ENCODE measurements at regions of chr2 and their contacts with region 1.

Region 1: DNA sequence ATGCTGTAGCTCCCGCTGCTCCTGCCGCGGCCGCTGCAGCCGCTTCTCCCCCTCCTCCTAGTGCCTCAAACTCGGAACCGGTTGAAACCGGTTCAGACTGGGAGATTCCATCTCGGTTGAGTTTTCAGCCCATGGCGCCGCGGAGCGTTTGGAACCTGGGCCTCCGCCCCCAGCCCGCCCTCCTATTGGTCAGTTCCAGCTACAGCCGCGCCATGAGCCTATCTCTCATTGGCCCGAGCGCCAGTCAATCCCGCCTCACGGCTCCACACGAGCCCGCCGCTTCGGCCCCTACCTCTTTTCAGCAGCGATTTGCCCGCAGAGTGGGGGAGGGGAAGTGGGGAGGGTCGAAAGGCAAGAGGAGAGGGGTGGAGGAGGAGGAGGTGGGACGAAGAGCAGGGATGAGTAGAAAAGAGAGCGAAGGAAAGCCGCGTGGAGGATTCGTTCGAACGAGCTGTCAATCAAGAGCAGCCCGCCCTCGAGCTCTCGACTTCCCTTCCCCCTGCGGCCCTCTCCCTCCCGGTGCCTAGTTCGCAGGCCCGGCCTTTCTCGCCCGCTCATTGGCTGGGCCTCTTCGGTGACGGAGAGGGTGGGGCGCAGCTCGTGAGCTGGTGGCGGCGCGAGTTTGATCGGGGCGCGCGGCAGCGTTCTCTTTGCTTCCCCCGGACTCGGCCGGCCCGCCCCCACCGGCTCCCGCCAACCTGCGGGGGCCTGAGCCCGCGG is at the start of gene XPO1:
- DNase-seq: peak; percentile 99 to 100
- H3K4me3 ChIP-seq: peak within 1 kb of the TSS; percentile 79 to 97
- H3K27ac ChIP-seq: peak within 1 kb of the TSS; percentile 98 to 99
- H3K4me1 ChIP-seq: peaks cover 6 to 29% (median 20%) of the 10 kb centered on the region in 4 donors
- H3K27me3 ChIP-seq: no peaks in the 10 kb centered on the region
- CTCF ChIP-seq: peak in 1 of 2 experiments; percentile 10

Region 2: DNA sequence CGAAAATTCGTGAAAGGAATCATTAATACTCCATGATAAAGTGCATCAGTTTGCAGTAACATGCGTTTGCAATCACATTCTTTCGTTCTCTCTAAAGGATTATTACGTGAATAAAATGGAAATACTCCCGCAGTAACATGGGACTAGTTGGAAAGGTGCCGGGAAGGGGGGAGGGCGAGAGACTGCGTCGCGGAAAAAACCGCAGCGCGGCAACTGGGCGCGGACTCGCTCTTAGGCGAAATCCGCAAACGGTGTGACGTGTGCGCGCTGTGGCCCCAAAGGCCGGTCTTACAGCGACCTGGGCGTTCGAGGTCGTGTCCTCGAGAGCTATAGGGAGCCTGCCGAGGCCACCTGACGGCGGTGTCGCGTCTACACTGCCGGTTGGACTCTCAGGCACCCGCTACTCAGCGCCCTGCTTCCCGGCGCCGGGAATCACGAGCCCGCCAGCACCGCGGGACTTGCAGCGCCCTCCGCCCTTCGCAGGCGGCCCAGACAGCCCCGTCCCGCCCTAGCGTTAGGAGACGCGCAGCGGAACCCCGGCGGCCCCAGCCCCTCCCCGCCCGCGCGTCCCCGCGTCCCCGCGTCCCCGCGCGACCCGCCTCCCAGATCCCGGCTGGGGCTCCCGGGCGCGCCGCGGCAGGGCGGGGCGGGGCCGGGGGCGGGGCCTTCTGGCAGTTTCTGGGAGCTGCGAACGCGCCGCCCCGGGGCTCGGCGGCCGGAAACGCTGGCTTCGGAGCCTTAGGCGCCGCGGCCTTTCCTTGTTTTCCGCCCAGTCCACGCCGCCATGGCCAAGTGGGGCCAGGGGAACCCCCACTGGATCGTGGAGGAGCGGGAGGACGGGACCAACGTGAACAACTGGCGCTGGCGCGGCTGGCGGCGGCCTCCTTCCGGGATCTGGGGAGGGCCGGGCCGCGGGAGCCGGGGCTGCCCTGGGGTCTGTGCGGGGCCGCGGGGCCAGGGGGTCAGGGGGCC is 361.3 kb before region 1 on chr2:
- intact Hi-C with region 1: loop called (anchors 2 kb)
- DNase-seq: peak; percentile 90 to 96
- H3K4me3 ChIP-seq: peak overlapping the region; percentile 58 to 82
- H3K27ac ChIP-seq: peak overlapping the region; percentile 90 to 98
- H3K4me1 ChIP-seq: peaks cover 0 to 46% (median 39%) of the 10 kb centered on the region in 4 donors
- H3K27me3 ChIP-seq: no peaks in the 10 kb centered on the region
- CTCF ChIP-seq: peak in 1 of 2 experiments; percentile 16

Region 3: DNA sequence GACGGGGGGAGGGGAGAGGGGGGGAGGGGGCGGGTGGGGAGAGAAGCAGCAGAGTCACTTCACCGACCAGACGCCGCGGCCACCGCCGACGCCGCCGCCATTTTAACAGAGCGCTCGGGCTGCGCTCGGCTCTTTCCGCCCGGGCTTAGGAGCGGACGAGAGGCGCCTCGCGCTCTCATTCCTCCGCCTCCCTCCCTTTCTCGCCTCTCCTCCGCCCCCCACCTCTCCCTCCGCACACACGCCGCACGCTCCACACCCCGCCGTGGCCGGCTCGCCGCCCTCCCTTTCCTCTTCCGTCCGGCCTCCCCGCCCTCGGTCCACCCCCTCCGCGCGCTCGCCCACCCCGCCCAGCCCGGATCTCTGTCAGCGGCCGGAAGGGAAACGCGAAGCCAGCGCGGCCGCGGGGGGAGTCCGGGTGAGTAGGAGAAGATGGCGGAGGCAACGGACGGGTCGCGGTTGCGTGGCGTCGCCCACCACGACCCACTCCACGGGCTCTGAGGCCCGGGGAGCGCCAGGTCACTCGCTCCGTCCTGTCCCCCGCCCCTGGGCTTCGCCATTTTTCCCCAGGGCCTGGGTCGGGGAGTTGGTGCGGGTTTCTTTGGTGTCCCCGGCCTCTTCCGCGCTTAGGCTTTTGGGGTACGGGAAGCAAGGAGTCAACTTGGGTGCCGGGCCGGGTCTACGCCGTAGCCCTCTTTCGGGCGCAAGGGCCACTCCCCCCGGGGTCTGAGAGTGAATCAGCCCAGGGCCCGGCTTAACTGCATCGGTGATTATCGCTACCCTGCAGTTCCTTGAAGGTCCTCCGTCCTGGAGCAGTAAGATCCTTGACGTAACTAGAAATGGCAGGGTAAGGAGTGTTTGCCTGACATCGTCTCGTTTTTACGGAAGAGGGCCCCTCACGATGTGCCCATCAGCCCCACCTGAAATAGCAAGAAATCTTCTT is 67.1 kb before region 1 on chr2 and contains the start of gene USP34:
- intact Hi-C with region 1: loop called (anchors 1 kb)
- DNase-seq: peak; percentile 93 to 97
- H3K4me3 ChIP-seq: peak within 1 kb of the TSS; percentile 82 to 94
- H3K27ac ChIP-seq: peak within 1 kb of the TSS; percentile 97 to 99
- H3K4me1 ChIP-seq: peaks cover 0 to 38% (median 18%) of the 10 kb centered on the region in 4 donors
- H3K27me3 ChIP-seq: no peaks in the 10 kb centered on the region
- CTCF ChIP-seq: no peak

Region 4: GRCh38 chr2:61694312-61695274 is 156.2 kb after region 1 on chr2:
- intact Hi-C with region 1: loop called (anchors 10 kb)
- DNase-seq: peak; percentile 93 to 96
- H3K4me3 ChIP-seq: peak overlapping the region; percentile 81 to 94
- H3K27ac ChIP-seq: peak overlapping the region; percentile 74 to 78
- H3K4me1 ChIP-seq: peaks cover 0 to 15% (median 5%) of the 10 kb centered on the region in 4 donors
- H3K27me3 ChIP-seq: no peaks in the 10 kb centered on the region
- CTCF ChIP-seq: peak; percentile 27 to 32

Region 5: GRCh38 chr2:61764035-61764800 is 225.9 kb after region 1 on chr2:
- intact Hi-C with region 1: loop called (anchors 5 kb)
- DNase-seq: peak; percentile 98 to 99
- H3K4me3 ChIP-seq: peak overlapping the region; percentile 67 to 72
- H3K27ac ChIP-seq: peak overlapping the region; percentile 95 to 96
- H3K4me1 ChIP-seq: no peaks in the 10 kb centered on the region
- H3K27me3 ChIP-seq: no peaks in the 10 kb centered on the region
- CTCF ChIP-seq: no peak

Region 6: GRCh38 chr2:61854474-61855182 is 316.3 kb after region 1 on chr2:
- intact Hi-C with region 1: loop called (anchors 5 kb)
- DNase-seq: peak; percentile 91 to 92
- H3K4me3 ChIP-seq: peak overlapping the region; percentile 70 to 80
- H3K27ac ChIP-seq: peak overlapping the region; percentile 90 to 94
- H3K4me1 ChIP-seq: peaks cover 0 to 15% (median 10%) of the 10 kb centered on the region in 4 donors
- H3K27me3 ChIP-seq: no peaks in the 10 kb centered on the region
- CTCF ChIP-seq: no peak

Measured in tibial artery (tissue), 4 donors.